Sciatic nerve (tissue), 2 donors: ENCODE measurements at regions of chr3 and their contacts with region 1.

Region 1: DNA sequence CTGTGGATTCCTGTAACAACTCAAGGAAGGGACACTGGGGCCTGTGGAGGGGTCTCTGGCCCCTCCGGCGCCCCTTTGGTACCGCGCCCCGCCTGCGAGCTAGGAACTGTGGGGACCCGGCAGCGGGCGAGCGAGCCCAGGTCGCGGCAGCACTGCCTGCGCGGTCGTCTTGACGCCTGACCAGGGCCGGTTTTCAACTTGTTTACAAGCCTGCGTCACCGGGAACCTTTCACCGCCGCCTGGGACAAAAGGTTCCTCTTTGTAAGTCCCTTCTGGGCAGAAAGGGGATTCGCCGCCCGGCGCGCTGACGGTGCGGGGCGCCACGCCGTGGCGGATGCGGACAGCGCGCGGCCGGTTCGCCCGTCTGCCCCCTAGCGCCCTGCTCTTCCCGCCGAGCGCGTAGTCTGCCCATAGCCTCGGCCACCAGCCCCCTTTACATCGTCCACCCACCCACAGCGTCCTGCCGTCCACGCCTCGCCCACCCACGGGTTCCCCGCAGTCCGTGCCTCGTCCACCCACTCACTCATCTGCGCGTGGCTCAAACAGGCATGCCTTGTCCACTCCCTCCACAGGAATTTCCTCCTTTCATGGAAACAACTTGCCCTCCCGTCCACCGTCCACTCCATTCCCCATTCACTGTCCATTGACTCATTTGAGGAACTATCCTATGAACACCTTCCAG is 5.5 kb upstream of the CFAP100 start:
- DNase-seq: peak; percentile 93
- ATAC-seq: peak; percentile 94

Region 2: GRCh38 chr3:126357295-126358037 is 31.8 kb before region 1 on chr3 and contains the start of gene KLF15:
- intact Hi-C with region 1: loop called (anchors 2 kb)
- DNase-seq: peak; percentile 92
- ATAC-seq: peak; percentile 76
- total RNA-seq, gene KLF15: 22.7 TPM

Region 3: GRCh38 chr3:126582311-126582710 is 193.1 kb after region 1 on chr3:
- intact Hi-C with region 1: no loop called
- DNase-seq: no peak
- ATAC-seq: no peak